CD8-positive, alpha-beta T cell (primary cell): ENCODE measurements at regions of chr6 and their contacts with region 1.

Region 1: DNA sequence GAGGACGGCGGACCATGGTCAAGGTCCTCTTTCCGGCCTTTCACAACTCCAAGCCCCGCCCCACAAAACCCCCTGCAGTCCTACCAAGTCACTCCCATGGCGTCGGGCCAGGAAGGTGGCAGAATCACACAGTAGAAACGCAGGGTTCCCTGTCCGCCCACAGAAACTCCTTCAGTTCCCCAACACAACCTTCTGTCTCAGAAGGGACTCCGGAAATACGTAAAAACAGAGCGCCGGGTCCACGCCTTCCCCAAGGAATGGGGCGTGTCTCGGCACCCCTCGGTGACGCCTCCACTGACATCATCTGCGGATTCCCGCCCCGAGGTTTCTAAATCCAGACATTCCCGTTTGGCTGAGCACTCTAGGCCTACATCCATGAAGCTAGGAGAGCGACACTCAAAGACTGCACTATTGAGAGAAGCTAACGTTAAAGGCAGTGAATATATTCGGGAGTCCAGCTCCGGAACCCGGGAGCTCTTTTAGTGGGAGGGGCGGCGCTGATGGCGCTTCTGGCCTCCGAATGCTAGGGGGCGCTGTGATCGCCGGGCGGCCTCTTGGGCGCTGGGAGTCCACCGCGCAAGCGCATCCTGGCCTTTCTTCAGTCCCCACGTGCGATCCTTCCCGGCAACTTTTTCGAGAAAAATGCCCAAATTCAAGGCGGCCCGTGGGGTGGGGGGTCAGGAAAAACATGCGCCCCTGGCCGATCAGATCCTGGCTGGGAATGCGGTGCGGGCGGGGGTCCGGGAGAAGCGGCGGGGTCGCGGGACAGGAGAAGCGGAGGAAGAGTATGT is at the starts of genes BYSL and MED20:
- DNase-seq: peak; percentile 86 to 98 (median 94)
- ATAC-seq: peak; percentile 92
- H3K4me3 ChIP-seq: peak within 1 kb of the TSS; percentile 96 to 97
- H3K4me3 Mint-ChIP-seq: peak within 1 kb of the TSS; percentile 100
- H3K27ac ChIP-seq: peak within 1 kb of the TSS; percentile 83 to 99
- H3K27ac Mint-ChIP-seq: peak within 1 kb of the TSS; percentile 100
- H3K4me1 ChIP-seq: peaks cover 32% of the 10 kb centered on the region
- H3K4me1 Mint-ChIP-seq: peaks cover 53% of the 10 kb centered on the region
- H3K27me3 ChIP-seq: no peaks in the 10 kb centered on the region
- H3K27me3 Mint-ChIP-seq: no peaks in the 10 kb centered on the region
- CTCF ChIP-seq: peak; percentile 97
- total RNA-seq, gene BYSL: 3.2 to 6.2 TPM
- total RNA-seq, gene MED20: 1.8 TPM

Region 2: GRCh38 chr6:41895300-41896233 is 25.5 kb before region 1 on chr6 and contains the start of gene USP49:
- CTCF ChIA-PET with region 1: interaction called, 6 read pairs
- POLR2A ChIA-PET with region 1: interaction called, 4 read pairs
- intact Hi-C with region 1: loop called (anchors 1 kb)
- DNase-seq: peak; percentile 80 to 94 (median 91)
- ATAC-seq: peak; percentile 95
- H3K4me3 ChIP-seq: peak within 1 kb of the TSS; percentile 78 to 90
- H3K4me3 Mint-ChIP-seq: no peak within 1 kb of the TSS
- H3K27ac ChIP-seq: peak within 1 kb of the TSS; percentile 55 to 77
- H3K27ac Mint-ChIP-seq: peak within 1 kb of the TSS; percentile 89
- H3K4me1 ChIP-seq: peaks cover 24% of the 10 kb centered on the region
- H3K4me1 Mint-ChIP-seq: peaks cover 10% of the 10 kb centered on the region
- H3K27me3 ChIP-seq: no peaks in the 10 kb centered on the region
- H3K27me3 Mint-ChIP-seq: no peaks in the 10 kb centered on the region
- CTCF ChIP-seq: no peak
- total RNA-seq, gene USP49: 1.6 to 1.8 TPM

Region 3: DNA sequence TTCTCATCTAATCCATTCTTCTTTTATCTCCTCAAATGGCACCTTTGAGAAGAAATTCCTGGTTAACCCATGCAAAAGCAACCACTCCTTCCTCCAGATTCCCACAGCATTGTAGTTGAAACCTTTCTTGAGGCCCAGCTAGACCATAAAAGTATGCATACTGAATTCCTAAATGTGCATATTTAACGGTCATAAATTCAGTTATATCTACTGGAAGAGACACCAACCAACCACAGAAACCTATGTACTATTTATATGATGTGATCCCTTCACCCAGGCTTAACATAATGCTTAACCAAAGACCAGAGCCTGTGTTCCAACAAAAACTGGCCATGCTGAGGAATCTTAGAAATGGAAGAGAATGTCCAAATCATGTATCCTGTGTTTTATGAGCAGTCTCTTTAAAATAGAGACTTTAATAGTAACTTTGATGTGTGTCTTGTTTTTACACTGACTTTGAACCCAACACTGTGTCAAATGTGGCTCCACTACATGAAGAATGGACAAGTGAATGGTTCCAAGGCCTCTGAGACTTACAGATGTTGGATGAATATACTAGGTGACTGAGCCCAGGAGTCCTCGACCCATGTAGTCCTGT is 117.8 kb after region 1 on chr6:
- CTCF ChIA-PET with region 1: interaction called, 44 read pairs
- POLR2A ChIA-PET with region 1: interaction called, 9 read pairs
- intact Hi-C with region 1: loop called (anchors 1 kb)
- DNase-seq: no peak
- ATAC-seq: no peak
- H3K4me3 ChIP-seq: peak overlapping the region; percentile 34 to 52
- H3K4me3 Mint-ChIP-seq: peak overlapping the region; percentile 79
- H3K27ac ChIP-seq: peak overlapping the region; percentile 32 to 57
- H3K27ac Mint-ChIP-seq: peak overlapping the region; percentile 95
- H3K4me1 ChIP-seq: peaks cover 80% of the 10 kb centered on the region
- H3K4me1 Mint-ChIP-seq: peaks cover 75% of the 10 kb centered on the region
- H3K27me3 ChIP-seq: no peaks in the 10 kb centered on the region
- H3K27me3 Mint-ChIP-seq: no peaks in the 10 kb centered on the region
- CTCF ChIP-seq: no peak

Region 4: DNA sequence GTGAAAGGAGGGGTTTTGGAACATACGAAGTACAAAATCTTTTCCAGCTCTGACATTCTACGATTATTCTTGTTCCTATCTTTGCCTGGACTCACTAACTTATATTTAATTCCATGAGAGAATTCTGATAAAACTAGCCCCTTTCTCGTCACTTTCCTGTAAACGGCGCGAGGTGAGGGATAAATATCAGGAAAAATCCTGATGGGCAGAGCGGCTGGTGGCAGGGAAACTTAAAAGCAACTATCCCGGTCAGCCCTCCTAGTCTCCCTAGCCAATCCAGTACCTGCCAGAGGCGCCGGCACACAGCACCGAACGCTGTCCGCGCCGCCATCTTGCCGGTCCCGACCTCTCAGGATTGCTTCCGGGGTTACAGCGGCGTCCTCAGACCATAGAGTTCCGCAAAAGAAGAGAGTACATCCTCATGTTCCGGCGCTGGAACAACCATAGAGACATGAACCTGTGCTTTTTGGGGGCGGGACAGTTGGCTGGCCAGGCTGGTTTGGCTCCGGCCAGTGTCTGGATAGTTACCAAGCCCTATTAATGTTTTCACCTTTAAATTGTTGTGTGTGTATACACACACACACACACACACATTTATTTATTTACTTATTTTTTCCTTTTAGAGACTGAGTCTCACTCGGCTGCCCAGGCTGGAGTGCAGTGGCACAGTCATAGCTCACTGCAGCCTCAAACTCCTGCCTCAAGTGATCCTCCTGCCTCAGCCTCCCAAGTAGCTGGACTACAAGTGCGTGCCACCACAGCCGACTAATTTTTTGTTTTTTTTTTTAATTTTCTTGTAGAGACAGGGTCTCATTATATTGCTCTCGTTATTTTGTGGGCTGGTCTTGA is 296.6 kb after region 1 on chr6 and contains the start of gene MRPS10:
- CTCF ChIA-PET with region 1: interaction called, 3 read pairs
- POLR2A ChIA-PET with region 1: no interaction called
- intact Hi-C with region 1: loop called (anchors 1 kb)
- DNase-seq: peak; percentile 81 to 95 (median 91)
- ATAC-seq: peak; percentile 99
- H3K4me3 ChIP-seq: peak within 1 kb of the TSS; percentile 70 to 93
- H3K4me3 Mint-ChIP-seq: peak within 1 kb of the TSS; percentile 99
- H3K27ac ChIP-seq: peak within 1 kb of the TSS; percentile 63 to 74
- H3K27ac Mint-ChIP-seq: peak within 1 kb of the TSS; percentile 97
- H3K4me1 ChIP-seq: peaks cover 8% of the 10 kb centered on the region
- H3K4me1 Mint-ChIP-seq: peaks cover 25% of the 10 kb centered on the region
- H3K27me3 ChIP-seq: no peaks in the 10 kb centered on the region
- H3K27me3 Mint-ChIP-seq: no peaks in the 10 kb centered on the region
- CTCF ChIP-seq: no peak
- total RNA-seq, gene MRPS10: 17.0 to 17.4 TPM